Body of pancreas (tissue), 4 donors: ENCODE measurements at regions of chr16 and their contacts with region 1.

Region 1: DNA sequence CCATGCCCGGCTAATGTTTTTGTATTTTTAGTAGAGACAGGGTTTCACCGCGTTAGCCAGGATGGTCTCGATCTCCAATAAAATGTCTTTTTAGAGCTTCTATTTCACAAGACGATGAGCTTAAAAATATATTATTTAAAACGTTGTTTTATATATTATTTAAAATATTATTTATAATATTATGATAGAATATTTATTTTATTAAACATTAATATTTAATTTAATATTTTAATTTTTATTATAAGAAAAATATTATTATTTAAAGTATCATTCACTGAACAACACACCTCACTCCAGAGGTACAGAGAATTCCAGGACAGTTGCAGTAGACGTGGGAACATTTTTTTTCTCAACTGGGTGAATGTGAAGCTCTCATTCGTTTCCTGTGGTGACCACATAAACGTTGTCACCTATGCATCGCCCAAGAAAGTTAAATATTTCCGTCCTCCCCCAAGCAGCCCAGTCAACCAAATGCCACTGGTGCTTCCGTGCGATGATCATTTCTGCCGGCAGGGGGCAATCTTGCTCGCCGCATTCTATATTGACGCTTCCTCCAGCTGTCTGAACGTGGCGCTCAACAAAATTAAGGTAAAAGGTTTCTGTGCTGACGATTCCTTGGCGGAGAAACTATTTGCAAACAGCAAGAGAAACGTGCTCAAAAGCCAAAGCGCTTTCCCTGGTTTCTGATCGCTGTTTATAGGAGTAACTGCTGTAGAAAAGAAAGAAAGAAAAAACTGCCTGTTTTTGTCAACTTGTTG is 41.7 kb upstream of the PRSS54 start:
- DNase-seq: peak; percentile 81 to 90 (median 86)
- ATAC-seq: peak; percentile 90
- H3K4me3 ChIP-seq: no peak overlapping the region
- H3K27ac ChIP-seq: no peak overlapping the region
- H3K4me1 ChIP-seq: peaks cover 9% of the 10 kb centered on the region
- H3K27me3 ChIP-seq: no peaks in the 10 kb centered on the region
- CTCF ChIP-seq: peak; percentile 85 to 96 (median 90)
- POLR2A ChIP-seq: no peak

Region 2: GRCh38 chr16:58249780-58250478 is 86.6 kb before region 1 on chr16:
- intact Hi-C with region 1: no loop called
- DNase-seq: peak; percentile 84 to 91 (median 88)
- ATAC-seq: peak; percentile 97
- H3K4me3 ChIP-seq: peak overlapping the region in 1 of 2 donors; percentile 42
- H3K27ac ChIP-seq: peak overlapping the region in 3 of 4 donors; percentile 51 to 70 (median 62)
- H3K4me1 ChIP-seq: peaks cover 16% of the 10 kb centered on the region
- H3K27me3 ChIP-seq: no peaks in the 10 kb centered on the region
- CTCF ChIP-seq: no peak
- POLR2A ChIP-seq: peak in 2 of 3 donors; percentile 61

Region 3: DNA sequence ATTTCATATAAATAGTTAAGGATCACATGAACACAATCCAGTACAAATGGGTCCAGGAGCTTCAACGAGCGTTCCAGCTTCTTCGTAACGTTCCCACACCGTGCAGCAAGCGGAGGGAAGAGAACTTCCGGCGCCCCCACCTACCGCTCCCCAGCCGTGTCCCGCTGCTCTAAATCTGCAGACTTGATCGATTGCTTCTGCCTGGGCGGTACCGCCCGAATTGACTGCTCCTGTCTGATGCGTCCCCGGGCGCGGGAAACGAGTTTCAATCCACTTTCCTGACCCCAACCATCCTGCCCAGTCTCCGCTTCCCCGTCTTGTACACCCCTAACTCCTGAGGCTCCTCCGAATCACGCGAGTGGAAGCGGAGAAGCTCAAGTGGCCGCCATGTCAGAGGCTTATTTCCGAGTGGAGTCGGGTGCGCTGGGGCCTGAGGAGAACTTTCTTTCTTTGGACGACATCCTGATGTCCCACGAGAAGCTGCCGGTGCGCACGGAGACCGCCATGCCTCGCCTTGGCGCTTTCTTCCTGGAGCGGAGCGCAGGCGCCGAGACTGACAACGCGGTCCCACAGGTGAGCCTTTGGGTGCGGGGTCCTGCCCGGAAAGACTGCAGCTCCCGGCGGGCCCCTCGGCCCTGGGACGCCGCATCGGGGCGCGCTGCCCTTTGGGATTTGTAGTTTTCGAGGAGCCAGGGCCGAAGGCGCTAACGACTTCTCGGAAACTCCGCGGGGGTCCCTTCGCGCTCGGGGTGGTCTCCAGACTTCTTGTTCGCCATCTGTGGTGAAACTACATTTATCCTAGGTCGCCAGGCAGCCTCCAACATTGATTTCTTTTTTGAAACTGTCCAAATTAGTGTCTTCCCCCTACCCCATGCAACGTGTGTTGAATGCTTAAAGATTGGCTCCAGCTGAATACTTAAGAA is 56.0 kb after region 1 on chr16 and contains the start of gene GINS3:
- intact Hi-C with region 1: no loop called
- DNase-seq: peak; percentile 86 to 91 (median 89)
- ATAC-seq: peak; percentile 96
- H3K4me3 ChIP-seq: peak within 1 kb of the TSS; percentile 76 to 98
- H3K27ac ChIP-seq: peak within 1 kb of the TSS; percentile 33 to 87 (median 72)
- H3K4me1 ChIP-seq: peaks cover 11% of the 10 kb centered on the region
- H3K27me3 ChIP-seq: no peaks in the 10 kb centered on the region
- CTCF ChIP-seq: no peak
- POLR2A ChIP-seq: peak in 2 of 3 donors; percentile 53 to 59
- total RNA-seq, gene GINS3: 2.6 to 3.6 TPM

Region 4: DNA sequence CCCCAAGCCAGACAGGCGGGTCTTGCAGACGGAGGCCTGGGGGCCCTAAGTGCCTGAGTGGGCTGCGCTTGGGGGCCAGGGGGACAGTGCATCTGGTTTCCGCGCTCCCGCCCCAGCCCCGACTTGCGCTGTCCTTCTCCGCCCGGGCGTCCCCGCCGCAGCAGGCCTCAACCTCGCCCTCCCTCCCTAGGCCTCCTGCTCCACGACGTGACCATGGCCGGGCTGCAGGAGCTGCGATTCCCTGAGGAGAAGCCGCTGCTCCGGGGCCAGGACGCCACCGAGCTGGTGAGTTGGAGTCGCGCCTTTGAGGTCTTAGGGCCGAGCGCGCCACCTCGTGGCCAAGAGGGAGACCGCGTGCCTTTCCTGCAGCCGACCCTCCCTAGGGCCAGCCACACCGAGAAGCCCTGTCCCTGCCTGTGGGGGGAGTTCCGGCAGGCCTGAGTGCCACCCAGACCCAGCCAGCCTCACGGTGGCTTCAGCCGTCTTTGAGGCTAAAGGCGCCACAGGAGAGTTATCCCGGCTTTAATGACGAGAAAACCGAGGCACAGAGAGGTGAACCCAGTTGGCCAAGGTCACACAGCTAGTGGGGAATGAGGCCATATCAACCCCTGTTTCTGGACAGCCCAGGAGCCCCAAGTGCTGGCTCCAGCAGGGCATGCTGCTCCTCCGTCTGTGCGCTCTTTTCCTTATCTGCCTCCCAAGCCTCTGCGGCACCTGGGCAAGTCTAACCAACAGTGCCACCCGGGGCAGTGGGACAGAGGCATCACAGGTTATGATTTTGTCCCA is 151.2 kb after region 1 on chr16:
- intact Hi-C with region 1: loop called (anchors 5 kb)
- DNase-seq: peak; percentile 82 to 87 (median 83)
- ATAC-seq: peak; percentile 91
- H3K4me3 ChIP-seq: no peak overlapping the region
- H3K27ac ChIP-seq: no peak overlapping the region
- H3K4me1 ChIP-seq: peaks cover 7% of the 10 kb centered on the region
- H3K27me3 ChIP-seq: no peaks in the 10 kb centered on the region
- CTCF ChIP-seq: peak; percentile 80 to 92 (median 86)
- POLR2A ChIP-seq: no peak

Region 5: DNA sequence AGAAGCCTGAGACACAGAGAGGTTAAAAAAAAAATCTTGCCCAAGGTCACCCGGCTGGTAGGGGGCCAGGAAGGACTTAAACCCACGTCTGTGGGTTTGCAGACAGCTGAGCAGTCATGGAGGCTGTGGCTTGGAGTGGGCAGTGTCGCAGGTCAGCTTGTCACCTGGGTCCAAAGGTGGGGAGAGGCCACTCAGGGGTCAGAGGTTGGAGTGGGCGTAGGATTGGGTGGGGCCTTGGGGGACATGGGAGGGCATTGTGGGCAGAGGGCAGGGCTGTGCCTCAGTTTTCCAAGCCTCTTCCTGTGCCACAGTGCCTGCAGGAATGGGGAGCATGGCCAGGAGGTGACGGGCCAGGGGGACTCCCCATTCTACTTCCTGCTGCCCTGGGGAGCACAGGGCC is 161.4 kb after region 1 on chr16:
- intact Hi-C with region 1: no loop called
- DNase-seq: peak in 2 of 4 donors; percentile 12 to 41
- ATAC-seq: no peak
- H3K4me3 ChIP-seq: no peak overlapping the region
- H3K27ac ChIP-seq: no peak overlapping the region
- H3K4me1 ChIP-seq: peaks cover 33% of the 10 kb centered on the region
- H3K27me3 ChIP-seq: no peaks in the 10 kb centered on the region
- CTCF ChIP-seq: no peak
- POLR2A ChIP-seq: no peak

Region 6: DNA sequence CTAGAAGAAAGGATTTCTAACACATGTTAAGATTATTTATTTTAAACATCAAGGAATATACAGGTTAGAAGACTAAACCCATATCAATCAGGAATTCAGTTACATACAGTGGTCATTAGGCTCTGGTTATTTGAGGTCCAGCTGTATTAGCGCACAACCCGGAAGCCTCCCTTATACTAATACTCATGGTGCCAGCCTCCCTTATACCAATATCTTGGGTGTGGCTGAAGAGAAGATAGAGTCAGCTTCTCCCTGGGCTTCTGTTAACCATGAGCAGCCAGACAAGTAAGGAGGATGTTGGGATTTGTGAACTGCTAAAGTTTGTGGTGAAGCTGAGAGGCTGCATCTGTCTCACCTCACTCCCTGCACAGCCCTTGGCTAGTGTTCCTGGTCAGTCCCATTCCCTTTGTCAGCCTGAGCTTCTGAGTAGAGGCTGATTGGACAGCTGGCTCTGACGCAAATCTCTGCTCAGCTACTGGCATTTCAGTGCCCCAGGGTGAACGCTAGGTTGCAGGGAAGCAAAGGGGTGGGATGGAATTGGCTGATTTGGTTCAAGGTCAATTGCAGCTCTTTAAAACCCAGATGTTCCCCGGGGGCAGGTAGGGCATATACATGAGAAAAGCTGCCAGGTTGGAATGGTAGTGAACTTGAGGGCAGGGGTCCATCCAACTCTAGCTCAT is 316.1 kb after region 1 on chr16:
- intact Hi-C with region 1: loop called (anchors 10 kb)
- DNase-seq: no peak
- ATAC-seq: no peak
- H3K4me3 ChIP-seq: no peak overlapping the region
- H3K27ac ChIP-seq: no peak overlapping the region
- H3K4me1 ChIP-seq: peaks cover 10% of the 10 kb centered on the region
- H3K27me3 ChIP-seq: no peaks in the 10 kb centered on the region
- CTCF ChIP-seq: no peak
- POLR2A ChIP-seq: no peak